ENCODE measurements at regions of chr5 and their contacts with region 1.

Region 1: GRCh38 chr5:170552621-170553115 is 48.8 kb downstream of the KCNIP1 start:
- DNase-seq: peak; percentile 28 to 84 (median 74)
- H3K4me3 ChIP-seq: peak overlapping the region in 13 of 59 donors; percentile 2 to 35 (median 19)
- H3K27ac ChIP-seq: peak overlapping the region in 57 of 59 donors; percentile 1 to 91 (median 74)
- H3K27me3 ChIP-seq: no peaks in the 10 kb centered on the region
- CTCF ChIP-seq: peak in 2 of 56 donors; percentile 16 to 19

Region 2: DNA sequence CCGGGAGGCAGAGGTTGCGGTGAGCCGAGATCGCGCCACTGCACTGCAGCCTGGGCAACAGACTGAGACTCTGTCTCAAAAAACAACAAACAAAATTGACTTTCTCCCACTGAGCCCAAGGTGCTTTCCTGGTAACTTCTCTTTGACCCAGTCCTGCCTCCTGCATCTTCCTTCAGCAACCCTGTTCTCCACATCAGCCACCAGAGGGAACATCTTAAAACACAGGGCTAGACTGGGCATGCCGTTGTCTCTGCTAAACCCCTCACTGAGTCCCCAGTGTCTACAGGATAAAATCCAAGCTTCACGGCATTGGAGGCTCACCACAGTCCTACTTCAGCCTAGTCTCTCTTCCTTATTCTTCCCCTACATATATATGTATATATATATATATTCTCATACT is 123.7 kb before region 1 on chr5:
- intact Hi-C with region 1: no loop called
- DNase-seq: no peak
- H3K4me3 ChIP-seq: no peak overlapping the region
- H3K27ac ChIP-seq: no peak overlapping the region
- H3K27me3 ChIP-seq: peaks cover 0 to 5% (median 0%) of the 10 kb centered on the region in 45 donors
- CTCF ChIP-seq: peak in 2 of 56 donors; percentile 19 to 29

Region 3: GRCh38 chr5:170623576-170624181 is 71.0 kb after region 1 on chr5:
- intact Hi-C with region 1: loop called in 1 of 2 experiments (anchors 5 kb)
- DNase-seq: peak in 7 of 10 donors; percentile 31 to 66 (median 47)
- H3K4me3 ChIP-seq: no peak overlapping the region
- H3K27ac ChIP-seq: no peak overlapping the region
- H3K27me3 ChIP-seq: no peaks in the 10 kb centered on the region
- CTCF ChIP-seq: peak in 53 of 56 donors; percentile 43 to 78 (median 65)

Region 4: GRCh38 chr5:170832254-170832653 is 279.6 kb after region 1 on chr5:
- intact Hi-C with region 1: no loop called
- DNase-seq: no peak
- H3K4me3 ChIP-seq: no peak overlapping the region
- H3K27ac ChIP-seq: no peak overlapping the region
- H3K27me3 ChIP-seq: peaks cover 0 to 5% (median 0%) of the 10 kb centered on the region in 45 donors
- CTCF ChIP-seq: no peak